K562 (cell line): ENCODE measurements at regions of chr16 and their contacts with region 1.

Region 1: GRCh38 chr16:81035398-81035974 is at the start of gene ATMIN:
- DNase-seq: peak; percentile 94 to 98 (median 96)
- ATAC-seq: peak; percentile 96
- H3K4me3 ChIP-seq: peak within 1 kb of the TSS; percentile 86
- H3K27ac ChIP-seq: peak within 1 kb of the TSS; percentile 72
- H3K4me1 ChIP-seq: peaks cover 9 to 14% of the 10 kb centered on the region in 2 experiments
- H3K27me3 ChIP-seq: no peaks in the 10 kb centered on the region
- CTCF ChIP-seq: peak; percentile 98 to 100 (median 99)
- EP300 ChIP-seq: peak; percentile 45
- POLR2A ChIP-seq: no peak
- RAD21 ChIP-seq: peak; percentile 79 to 91
- polyA plus RNA-seq, gene ATMIN: 6.7 to 7.8 TPM

Region 2: GRCh38 chr16:79770244-79771064 is 1265.0 kb before region 1 on chr16:
- CTCF ChIA-PET with region 1: no interaction called
- POLR2A ChIA-PET with region 1: no interaction called
- in situ Hi-C with region 1: no loop called
- intact Hi-C with region 1: no loop called
- DNase-seq: peak; percentile 95 to 99 (median 98)
- ATAC-seq: peak; percentile 99
- H3K4me3 ChIP-seq: peak overlapping the region; percentile 48
- H3K27ac ChIP-seq: peak overlapping the region; percentile 87
- H3K4me1 ChIP-seq: peaks cover 11 to 36% of the 10 kb centered on the region in 2 experiments
- H3K27me3 ChIP-seq: no peaks in the 10 kb centered on the region
- CTCF ChIP-seq: no peak; a peak in 1 of 6 replicates
- EP300 ChIP-seq: no peak
- POLR2A ChIP-seq: peak; percentile 72
- RAD21 ChIP-seq: no peak

Region 3: GRCh38 chr16:80974649-80975376 is 60.7 kb before region 1 on chr16:
- CTCF ChIA-PET with region 1: no interaction called
- POLR2A ChIA-PET with region 1: no interaction called
- in situ Hi-C with region 1: no loop called
- intact Hi-C with region 1: no loop called
- DNase-seq: peak in 3 of 4 experiments; percentile 24 to 32 (median 30)
- ATAC-seq: peak; percentile 68
- H3K4me3 ChIP-seq: no peak overlapping the region
- H3K27ac ChIP-seq: no peak overlapping the region
- H3K4me1 ChIP-seq: no peaks in the 10 kb centered on the region; a peak in 1 of 5 replicates
- H3K27me3 ChIP-seq: no peaks in the 10 kb centered on the region
- CTCF ChIP-seq: peak; percentile 51 to 70 (median 68)
- EP300 ChIP-seq: no peak
- POLR2A ChIP-seq: no peak
- RAD21 ChIP-seq: peak in 1 of 2 experiments; percentile 31; a peak in 1 of 4 replicates

Region 4: GRCh38 chr16:81018496-81018895 is 17.0 kb before region 1 on chr16:
- CTCF ChIA-PET with region 1: no interaction called
- POLR2A ChIA-PET with region 1: interaction called, 11 read pairs
- in situ Hi-C with region 1: no loop called
- intact Hi-C with region 1: no loop called
- DNase-seq: no peak
- ATAC-seq: no peak
- H3K4me3 ChIP-seq: no peak overlapping the region
- H3K27ac ChIP-seq: no peak overlapping the region
- H3K4me1 ChIP-seq: no peaks in the 10 kb centered on the region
- H3K27me3 ChIP-seq: no peaks in the 10 kb centered on the region
- CTCF ChIP-seq: no peak
- EP300 ChIP-seq: no peak
- POLR2A ChIP-seq: no peak
- RAD21 ChIP-seq: no peak

Region 5: DNA sequence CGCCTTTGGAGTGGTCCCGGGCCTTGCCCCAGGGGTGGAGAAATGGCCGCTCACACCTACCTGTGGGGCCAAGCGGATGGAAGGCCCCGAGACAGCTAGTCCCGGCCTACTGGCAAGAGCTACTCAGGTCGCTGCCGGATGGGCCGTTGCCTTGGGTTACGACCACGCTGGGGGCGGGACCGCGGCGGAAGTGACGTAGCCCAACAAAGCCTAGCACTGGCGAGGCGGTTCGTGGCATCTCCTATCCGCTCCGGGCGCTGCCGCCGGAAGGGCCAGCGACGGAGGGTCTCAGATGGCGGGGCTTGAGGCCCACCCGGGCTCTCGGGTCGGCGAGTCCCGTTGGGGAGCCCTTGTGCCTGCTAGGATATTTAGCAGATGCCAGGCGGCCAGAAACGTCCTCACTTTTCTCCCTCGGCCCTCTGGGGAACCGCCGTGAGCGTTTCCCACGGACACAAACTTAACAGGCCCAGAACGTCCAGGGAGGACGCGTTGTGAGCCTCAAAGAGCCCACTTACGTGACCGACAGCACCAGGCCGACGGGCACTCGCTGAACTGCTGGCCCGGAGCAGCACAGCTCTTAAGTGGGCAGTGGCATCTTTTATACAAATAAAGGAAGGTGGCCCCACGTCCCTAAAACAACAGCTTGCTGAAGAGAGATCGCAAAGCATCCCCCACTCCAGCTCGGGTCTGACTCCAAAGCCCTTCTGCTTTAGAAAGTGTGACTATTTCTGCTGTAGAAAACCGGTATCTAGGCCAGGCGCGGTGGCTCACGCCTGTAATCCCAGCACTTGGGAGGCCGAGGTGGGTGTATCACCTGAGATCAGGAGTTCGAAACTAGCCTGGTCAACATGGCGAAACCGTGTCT is 41.8 kb after region 1 on chr16 and contains the start of gene C16orf46:
- CTCF ChIA-PET with region 1: interaction called, 5 read pairs
- POLR2A ChIA-PET with region 1: interaction called, 4 read pairs
- in situ Hi-C with region 1: no loop called
- intact Hi-C with region 1: loop called (anchors 2 kb)
- DNase-seq: peak; percentile 94 to 98 (median 96)
- ATAC-seq: peak; percentile 96
- H3K4me3 ChIP-seq: peak within 1 kb of the TSS; percentile 92
- H3K27ac ChIP-seq: peak within 1 kb of the TSS; percentile 81
- H3K4me1 ChIP-seq: peaks cover 7 to 16% of the 10 kb centered on the region in 2 experiments; a peak in 4 of 5 replicates
- H3K27me3 ChIP-seq: no peaks in the 10 kb centered on the region
- CTCF ChIP-seq: no peak
- EP300 ChIP-seq: no peak
- POLR2A ChIP-seq: peak; percentile 90
- RAD21 ChIP-seq: no peak; a peak in 2 of 4 replicates
- polyA plus RNA-seq, gene C16orf46: 0.10 to 0.13 TPM

Region 6: GRCh38 chr16:81095953-81096717 is 60.6 kb after region 1 on chr16 and contains the start of gene GCSH:
- CTCF ChIA-PET with region 1: interaction called, 6 read pairs
- POLR2A ChIA-PET with region 1: interaction called, 3 read pairs
- in situ Hi-C with region 1: no loop called
- intact Hi-C with region 1: loop called (anchors 5 kb)
- DNase-seq: peak; percentile 99 to 100 (median 99)
- ATAC-seq: peak; percentile 98
- H3K4me3 ChIP-seq: peak within 1 kb of the TSS; percentile 93
- H3K27ac ChIP-seq: peak within 1 kb of the TSS; percentile 92
- H3K4me1 ChIP-seq: peaks cover 21 to 26% of the 10 kb centered on the region in 2 experiments
- H3K27me3 ChIP-seq: no peaks in the 10 kb centered on the region
- CTCF ChIP-seq: no peak
- EP300 ChIP-seq: no peak
- POLR2A ChIP-seq: no peak; the same call in none of the 2 replicates
- RAD21 ChIP-seq: no peak
- polyA plus RNA-seq, gene GCSH: 35.0 to 35.2 TPM

Region 7: DNA sequence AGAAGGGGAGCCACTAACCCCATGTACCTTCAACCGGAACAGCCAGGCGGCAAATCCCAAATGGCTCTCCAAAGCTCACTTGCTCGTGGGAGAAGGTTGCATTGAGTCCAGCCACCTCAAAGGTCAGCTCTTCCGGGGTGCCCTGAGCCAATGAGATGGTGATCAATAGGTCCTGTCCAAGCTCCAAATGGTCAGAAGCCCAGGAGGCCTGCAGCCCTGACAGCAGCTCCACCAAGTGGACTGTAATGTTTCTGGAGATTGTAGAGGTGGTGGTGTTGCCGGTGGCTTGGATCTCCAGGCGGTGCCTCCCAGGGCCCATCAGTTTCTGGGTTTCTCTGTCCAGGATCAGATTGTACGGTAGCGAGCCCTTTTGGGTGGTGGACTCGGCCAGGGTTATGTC is 163.1 kb after region 1 on chr16:
- CTCF ChIA-PET with region 1: interaction called, 4 read pairs
- POLR2A ChIA-PET with region 1: interaction called, 3 read pairs
- in situ Hi-C with region 1: no loop called
- intact Hi-C with region 1: loop called (anchors 5 kb)
- DNase-seq: peak in 3 of 4 experiments; percentile 31 to 43 (median 42)
- ATAC-seq: peak; percentile 91
- H3K4me3 ChIP-seq: no peak overlapping the region
- H3K27ac ChIP-seq: no peak overlapping the region
- H3K4me1 ChIP-seq: no peaks in the 10 kb centered on the region; a peak in 1 of 5 replicates
- H3K27me3 ChIP-seq: peaks cover 43 to 88% of the 10 kb centered on the region in 2 experiments
- CTCF ChIP-seq: peak; percentile 56 to 72 (median 68)
- EP300 ChIP-seq: no peak
- POLR2A ChIP-seq: no peak
- RAD21 ChIP-seq: peak; percentile 61 to 80